SK-N-SH (cell line): ENCODE measurements at regions of chr11 and their contacts with region 1.

Region 1: DNA sequence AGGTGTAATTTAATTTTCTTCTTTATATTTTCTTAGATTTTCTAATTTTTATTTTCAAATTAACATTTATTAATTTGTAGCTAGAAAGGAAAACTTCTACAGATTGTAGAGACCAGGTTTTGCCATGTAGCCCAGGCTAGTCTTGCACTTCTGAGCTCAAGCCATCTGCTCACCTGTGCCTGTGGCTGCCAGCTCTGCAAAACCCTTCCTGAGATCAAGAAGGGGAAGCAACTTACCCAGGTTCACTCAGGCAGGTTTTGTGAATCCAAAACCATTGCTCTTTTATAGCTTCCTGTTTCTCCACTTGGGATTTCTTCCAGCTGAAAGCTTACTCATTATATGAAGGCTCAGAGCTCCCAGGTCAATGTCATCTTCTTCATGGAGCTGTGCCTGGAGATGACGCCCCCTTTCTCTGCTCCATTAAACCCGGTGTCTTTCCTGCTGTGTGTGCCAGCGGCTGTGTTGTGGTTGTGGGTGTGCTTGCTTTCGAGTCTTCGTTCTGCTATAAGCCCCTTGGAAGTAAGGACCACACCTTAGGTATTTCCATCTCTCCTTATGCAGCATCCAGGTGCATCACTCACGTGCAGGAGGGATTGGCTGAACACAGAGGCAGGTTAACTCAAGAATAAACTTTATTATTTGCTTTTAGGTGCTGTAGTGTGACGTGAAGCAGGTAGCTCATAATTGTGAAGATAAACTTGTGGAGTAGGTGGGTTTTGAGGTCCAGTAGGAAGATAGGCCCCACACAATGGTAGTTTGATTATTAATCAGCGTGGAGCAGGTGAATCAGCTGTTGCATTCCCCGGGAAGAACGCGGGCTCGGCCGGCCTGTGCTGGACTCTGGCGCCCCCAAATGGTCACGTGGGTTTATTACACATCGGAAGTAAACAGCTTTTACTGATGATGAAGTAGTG is 42.2 kb upstream of the INCENP start:
- DNase-seq: peak; percentile 76
- H3K4me3 ChIP-seq: no peak overlapping the region
- H3K27ac ChIP-seq: no peak overlapping the region
- H3K4me1 ChIP-seq: peaks cover 0 to 5% of the 10 kb centered on the region in 2 experiments; a peak in 1 of 4 replicates
- H3K27me3 ChIP-seq: no peaks in the 10 kb centered on the region
- CTCF ChIP-seq: peak; percentile 94
- EP300 ChIP-seq: no peak
- RAD21 ChIP-seq: peak; percentile 98

Region 2: GRCh38 chr11:61091373-61092279 is 990.0 kb before region 1 on chr11:
- CTCF ChIA-PET with region 1: no interaction called
- POLR2A ChIA-PET with region 1: no interaction called
- DNase-seq: no peak
- H3K4me3 ChIP-seq: no peak overlapping the region
- H3K27ac ChIP-seq: no peak overlapping the region
- H3K4me1 ChIP-seq: no peaks in the 10 kb centered on the region
- H3K27me3 ChIP-seq: no peaks in the 10 kb centered on the region; the same call in 1 of the 2 replicates
- CTCF ChIP-seq: no peak
- EP300 ChIP-seq: no peak
- RAD21 ChIP-seq: no peak

Region 3: GRCh38 chr11:61792310-61793085 is 289.1 kb before region 1 on chr11 and contains the starts of genes FEN1 and TMEM258:
- CTCF ChIA-PET with region 1: interaction called, 52 read pairs
- POLR2A ChIA-PET with region 1: no interaction called
- DNase-seq: peak; percentile 88
- H3K4me3 ChIP-seq: peak within 1 kb of the TSS; percentile 95 to 98
- H3K27ac ChIP-seq: peak within 1 kb of the TSS; percentile 99 to 100
- H3K4me1 ChIP-seq: peaks cover 5 to 19% of the 10 kb centered on the region in 2 experiments; a peak in 3 of 4 replicates
- H3K27me3 ChIP-seq: no peaks in the 10 kb centered on the region
- CTCF ChIP-seq: no peak
- EP300 ChIP-seq: no peak
- RAD21 ChIP-seq: no peak
- polyA plus RNA-seq, gene FEN1: 35.9 and 39.5 TPM in 2 replicates
- polyA plus RNA-seq, gene TMEM258: 454 and 617 TPM in 2 replicates

Region 4: GRCh38 chr11:61885166-61885778 is 196.4 kb before region 1 on chr11:
- CTCF ChIA-PET with region 1: interaction called, 22 read pairs
- POLR2A ChIA-PET with region 1: no interaction called
- DNase-seq: no peak
- H3K4me3 ChIP-seq: no peak overlapping the region
- H3K27ac ChIP-seq: no peak overlapping the region
- H3K4me1 ChIP-seq: peaks cover 7 to 11% of the 10 kb centered on the region in 2 experiments; a peak in 3 of 4 replicates
- H3K27me3 ChIP-seq: no peaks in the 10 kb centered on the region
- CTCF ChIP-seq: no peak
- EP300 ChIP-seq: no peak
- RAD21 ChIP-seq: no peak

Region 5: DNA sequence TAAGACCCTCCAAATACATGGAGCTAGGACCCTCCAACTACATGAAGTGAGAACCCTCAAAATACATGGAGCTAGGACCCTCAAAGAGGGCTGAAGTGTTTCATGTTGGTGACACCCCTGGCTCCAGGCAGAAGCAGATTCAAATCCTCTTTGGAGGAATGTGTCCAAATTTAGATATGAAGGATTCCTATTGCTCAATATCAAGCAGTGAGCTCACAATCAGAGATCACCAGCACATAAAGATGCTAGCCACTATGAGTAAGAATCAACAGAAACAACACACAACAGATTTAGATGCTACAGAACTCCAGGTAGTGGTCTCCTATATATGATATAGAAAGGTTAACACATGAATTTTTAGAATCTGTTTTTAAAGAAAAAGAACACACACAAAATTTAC is 153.0 kb before region 1 on chr11:
- CTCF ChIA-PET with region 1: interaction called, 17 read pairs
- POLR2A ChIA-PET with region 1: no interaction called
- DNase-seq: no peak
- H3K4me3 ChIP-seq: no peak overlapping the region
- H3K27ac ChIP-seq: no peak overlapping the region
- H3K4me1 ChIP-seq: peaks cover 4 to 8% of the 10 kb centered on the region in 2 experiments; a peak in 3 of 4 replicates
- H3K27me3 ChIP-seq: no peaks in the 10 kb centered on the region
- CTCF ChIP-seq: no peak
- EP300 ChIP-seq: no peak
- RAD21 ChIP-seq: no peak

Region 6: DNA sequence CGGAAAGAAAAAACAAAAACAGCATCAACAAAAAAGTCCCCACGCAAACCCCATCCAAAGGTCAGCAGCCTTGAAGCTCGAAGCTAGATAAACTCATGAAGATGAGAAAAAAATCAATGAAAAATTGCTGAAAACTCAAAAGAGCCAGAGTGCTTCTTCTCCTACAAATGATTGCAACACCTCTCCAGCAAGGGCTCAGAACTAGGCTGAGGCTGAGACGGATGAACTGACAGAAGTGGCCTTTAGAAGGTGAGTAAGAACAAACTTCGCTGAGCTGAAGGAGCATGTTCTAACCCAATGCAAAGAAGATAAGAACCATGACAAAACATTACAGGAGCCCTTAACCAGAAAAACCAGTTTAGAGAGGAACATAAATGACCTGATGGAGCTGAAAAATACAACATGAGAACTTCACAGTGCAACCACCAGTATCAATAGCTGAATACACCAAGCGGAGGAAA is 95.7 kb before region 1 on chr11:
- CTCF ChIA-PET with region 1: interaction called, 10 read pairs
- POLR2A ChIA-PET with region 1: no interaction called
- DNase-seq: no peak
- H3K4me3 ChIP-seq: no peak overlapping the region
- H3K27ac ChIP-seq: no peak overlapping the region
- H3K4me1 ChIP-seq: peaks cover 3 to 4% of the 10 kb centered on the region in 2 experiments; a peak in 2 of 4 replicates
- H3K27me3 ChIP-seq: no peaks in the 10 kb centered on the region
- CTCF ChIP-seq: no peak
- EP300 ChIP-seq: no peak
- RAD21 ChIP-seq: no peak

Region 7: GRCh38 chr11:62054484-62055121 is 27.0 kb before region 1 on chr11:
- CTCF ChIA-PET with region 1: interaction called, 31 read pairs
- POLR2A ChIA-PET with region 1: no interaction called
- DNase-seq: no peak
- H3K4me3 ChIP-seq: no peak overlapping the region
- H3K27ac ChIP-seq: no peak overlapping the region
- H3K4me1 ChIP-seq: no peaks in the 10 kb centered on the region
- H3K27me3 ChIP-seq: no peaks in the 10 kb centered on the region
- CTCF ChIP-seq: peak; percentile 27; the same call in 1 of the 2 replicates
- EP300 ChIP-seq: no peak
- RAD21 ChIP-seq: peak; percentile 48

Region 8: GRCh38 chr11:62116458-62116857 is 34.8 kb after region 1 on chr11:
- CTCF ChIA-PET with region 1: interaction called, 10 read pairs
- POLR2A ChIA-PET with region 1: no interaction called
- DNase-seq: no peak
- H3K4me3 ChIP-seq: no peak overlapping the region
- H3K27ac ChIP-seq: no peak overlapping the region
- H3K4me1 ChIP-seq: no peaks in the 10 kb centered on the region
- H3K27me3 ChIP-seq: no peaks in the 10 kb centered on the region
- CTCF ChIP-seq: no peak
- EP300 ChIP-seq: no peak
- RAD21 ChIP-seq: no peak